Activated B cell treated with CpG ODN at 0.5 μM for 24 hours (primary cell): ENCODE measurements at regions of chr5 and their contacts with region 1.

Region 1: GRCh38 chr5:43313035-43313853 is at the start of gene HMGCS1:
- DNase-seq: peak; percentile 98
- ATAC-seq: peak; percentile 86
- H3K4me3 Mint-ChIP-seq: peak within 1 kb of the TSS; percentile 99
- H3K27ac Mint-ChIP-seq: peak within 1 kb of the TSS; percentile 95
- H3K4me1 Mint-ChIP-seq: peaks cover 55% of the 10 kb centered on the region
- H3K27me3 Mint-ChIP-seq: no peaks in the 10 kb centered on the region
- CTCF ChIP-seq: no peak
- total RNA-seq, gene HMGCS1: 133 and 160 TPM in 2 replicates

Region 2: GRCh38 chr5:41924872-41925554 is 1388.2 kb before region 1 on chr5 and contains the start of gene FBXO4:
- CTCF ChIA-PET with region 1: no interaction called
- POLR2A ChIA-PET with region 1: interaction called, 3 read pairs
- intact Hi-C with region 1: loop called (anchors 5 kb)
- DNase-seq: peak; percentile 82
- ATAC-seq: peak; percentile 95
- H3K4me3 Mint-ChIP-seq: peak within 1 kb of the TSS; percentile 93
- H3K27ac Mint-ChIP-seq: peak within 1 kb of the TSS; percentile 97
- H3K4me1 Mint-ChIP-seq: peaks cover 24% of the 10 kb centered on the region
- H3K27me3 Mint-ChIP-seq: no peaks in the 10 kb centered on the region
- CTCF ChIP-seq: no peak
- total RNA-seq, gene FBXO4: 14.8 and 15.9 TPM in 2 replicates

Region 3: DNA sequence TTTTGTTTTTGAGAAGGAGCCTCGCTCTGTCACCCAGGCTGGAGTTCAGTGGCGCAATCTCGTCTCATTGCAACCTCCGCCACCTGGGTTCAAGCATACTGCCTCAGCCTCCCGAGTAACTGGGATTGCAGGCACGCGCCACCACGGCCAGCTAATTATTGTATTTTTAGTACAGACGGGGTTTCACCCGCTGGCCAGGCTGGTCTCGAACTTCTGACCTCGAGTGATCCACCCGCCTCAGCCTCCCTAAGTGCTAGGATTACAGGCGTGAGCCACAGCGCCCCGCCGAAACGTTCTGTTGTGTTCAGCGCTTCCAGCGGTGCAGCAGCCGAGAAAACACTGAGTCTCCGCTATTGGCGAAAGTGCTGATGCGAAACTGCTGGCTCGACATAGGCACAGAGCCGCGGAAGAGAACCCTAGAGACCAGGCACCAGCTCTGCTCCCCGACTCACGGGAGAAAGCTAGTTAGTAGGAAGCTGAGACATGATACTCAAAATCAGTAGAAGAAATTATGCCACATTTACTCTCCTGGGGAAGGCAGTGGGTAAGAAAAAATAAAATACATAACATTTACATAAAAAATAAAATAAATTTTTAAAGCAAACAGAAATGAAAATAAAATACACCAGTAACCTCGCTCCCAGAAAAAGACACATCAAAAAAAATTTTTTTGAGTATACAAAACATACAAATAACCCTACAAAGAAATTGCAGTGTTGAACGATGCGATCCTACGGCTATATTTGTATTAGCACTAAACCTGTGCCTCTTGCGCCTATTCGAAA is 304.7 kb before region 1 on chr5:
- CTCF ChIA-PET with region 1: no interaction called
- POLR2A ChIA-PET with region 1: interaction called, 12 read pairs
- intact Hi-C with region 1: loop called (anchors 1 kb)
- DNase-seq: peak; percentile 77
- ATAC-seq: peak; percentile 53
- H3K4me3 Mint-ChIP-seq: peak overlapping the region; percentile 89
- H3K27ac Mint-ChIP-seq: peak overlapping the region; percentile 98
- H3K4me1 Mint-ChIP-seq: peaks cover 31% of the 10 kb centered on the region
- H3K27me3 Mint-ChIP-seq: no peaks in the 10 kb centered on the region
- CTCF ChIP-seq: no peak

Region 4: GRCh38 chr5:43105369-43106289 is 207.6 kb before region 1 on chr5:
- CTCF ChIA-PET with region 1: no interaction called
- POLR2A ChIA-PET with region 1: no interaction called
- intact Hi-C with region 1: loop called (anchors 1 kb)
- DNase-seq: peak; percentile 73
- ATAC-seq: peak; percentile 99
- H3K4me3 Mint-ChIP-seq: peak overlapping the region; percentile 83
- H3K27ac Mint-ChIP-seq: peak overlapping the region; percentile 80
- H3K4me1 Mint-ChIP-seq: peaks cover 7% of the 10 kb centered on the region
- H3K27me3 Mint-ChIP-seq: peaks cover 2% of the 10 kb centered on the region
- CTCF ChIP-seq: peak; percentile 100

Region 5: GRCh38 chr5:43256261-43256966 is 56.8 kb before region 1 on chr5:
- CTCF ChIA-PET with region 1: no interaction called
- POLR2A ChIA-PET with region 1: no interaction called
- intact Hi-C with region 1: no loop called
- DNase-seq: no peak
- ATAC-seq: no peak
- H3K4me3 Mint-ChIP-seq: no peak overlapping the region
- H3K27ac Mint-ChIP-seq: no peak overlapping the region
- H3K4me1 Mint-ChIP-seq: no peaks in the 10 kb centered on the region
- H3K27me3 Mint-ChIP-seq: peaks cover 11% of the 10 kb centered on the region
- CTCF ChIP-seq: no peak

Region 6: DNA sequence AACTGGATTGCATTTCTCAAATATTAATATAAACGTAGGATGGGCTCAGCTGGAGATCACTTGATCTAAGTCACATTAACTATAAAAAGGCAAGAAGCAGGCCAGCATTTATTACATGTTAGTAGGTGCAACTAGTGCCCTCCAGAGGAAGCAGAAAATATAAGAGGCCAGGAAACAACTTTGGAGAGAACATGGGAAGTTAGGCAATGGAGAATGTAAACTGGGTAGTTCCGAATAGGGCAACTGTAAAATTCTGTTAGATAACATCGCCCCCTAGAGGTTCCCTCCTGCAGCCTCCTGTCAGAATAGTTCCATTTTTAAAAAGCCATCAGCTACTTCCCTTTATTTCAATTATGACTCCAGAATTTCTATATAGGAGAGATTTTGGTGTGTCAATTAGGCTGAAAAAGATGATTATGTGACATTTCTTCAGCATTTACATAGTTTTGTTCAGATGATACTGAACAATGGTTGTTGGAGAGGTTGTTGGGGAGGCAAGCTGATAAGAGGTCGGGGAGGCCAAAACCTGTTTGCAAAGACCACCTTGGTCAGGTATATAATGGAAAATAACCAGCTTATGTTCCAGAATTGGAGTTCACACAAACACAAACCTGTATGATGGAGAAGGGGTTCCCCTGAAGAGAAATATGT is 76.6 kb after region 1 on chr5:
- CTCF ChIA-PET with region 1: interaction called, 21 read pairs
- POLR2A ChIA-PET with region 1: no interaction called
- intact Hi-C with region 1: loop called (anchors 1 kb)
- DNase-seq: no peak
- ATAC-seq: peak; percentile 84
- H3K4me3 Mint-ChIP-seq: no peak overlapping the region
- H3K27ac Mint-ChIP-seq: peak overlapping the region; percentile 30
- H3K4me1 Mint-ChIP-seq: peaks cover 16% of the 10 kb centered on the region
- H3K27me3 Mint-ChIP-seq: no peaks in the 10 kb centered on the region
- CTCF ChIP-seq: peak; percentile 64

Region 7: DNA sequence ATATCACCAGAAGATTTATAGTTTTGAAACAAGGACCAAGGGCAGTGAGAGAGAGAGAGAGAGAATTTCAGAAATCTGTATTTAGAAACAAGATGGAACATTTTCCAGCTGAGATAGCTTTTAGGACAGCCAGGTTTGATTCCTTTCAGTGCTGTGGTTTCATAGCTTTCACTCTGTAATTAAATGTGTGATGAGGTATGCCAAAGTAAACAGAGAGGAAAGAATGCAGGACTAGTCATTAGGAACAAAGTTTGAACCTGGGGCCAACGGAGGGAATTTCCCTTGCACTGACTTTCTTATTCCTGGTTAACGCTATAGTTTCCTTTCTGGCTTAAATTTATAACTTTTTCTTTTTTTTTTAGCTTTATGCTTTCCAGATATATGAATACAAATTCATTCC is 108.9 kb after region 1 on chr5:
- CTCF ChIA-PET with region 1: no interaction called
- POLR2A ChIA-PET with region 1: no interaction called
- intact Hi-C with region 1: no loop called
- DNase-seq: no peak
- ATAC-seq: no peak
- H3K4me3 Mint-ChIP-seq: no peak overlapping the region
- H3K27ac Mint-ChIP-seq: no peak overlapping the region
- H3K4me1 Mint-ChIP-seq: no peaks in the 10 kb centered on the region
- H3K27me3 Mint-ChIP-seq: no peaks in the 10 kb centered on the region
- CTCF ChIP-seq: no peak

Region 8: GRCh38 chr5:43602461-43603343 is 289.5 kb after region 1 on chr5 and contains the start of gene NNT:
- CTCF ChIA-PET with region 1: no interaction called
- POLR2A ChIA-PET with region 1: interaction called, 15 read pairs
- intact Hi-C with region 1: loop called (anchors 1 kb)
- DNase-seq: peak; percentile 76
- ATAC-seq: peak; percentile 69
- H3K4me3 Mint-ChIP-seq: peak within 1 kb of the TSS; percentile 95
- H3K27ac Mint-ChIP-seq: peak within 1 kb of the TSS; percentile 93
- H3K4me1 Mint-ChIP-seq: peaks cover 42% of the 10 kb centered on the region
- H3K27me3 Mint-ChIP-seq: no peaks in the 10 kb centered on the region
- CTCF ChIP-seq: no peak
- total RNA-seq, gene NNT: 59.0 and 63.0 TPM in 2 replicates